ENCODE measurements at regions of chr1 and their contacts with region 1.

Region 1: GRCh38 chr1:28581536-28582247 is 10.4 kb upstream of the RAB42 start:
- DNase-seq: peak; percentile 91 to 94 (median 93)
- H3K4me3 ChIP-seq: peak overlapping the region; percentile 82 to 99
- H3K4me3 Mint-ChIP-seq: peak overlapping the region; percentile 94 to 99 (median 98)
- H3K27ac ChIP-seq: peak overlapping the region; percentile 82
- H3K27ac Mint-ChIP-seq: peak overlapping the region; percentile 92 to 98 (median 95)
- H3K4me1 ChIP-seq: peaks cover 33% of the 10 kb centered on the region
- H3K4me1 Mint-ChIP-seq: peaks cover 21 to 54% (median 38%) of the 10 kb centered on the region in 4 donors
- H3K27me3 ChIP-seq: no peaks in the 10 kb centered on the region
- H3K27me3 Mint-ChIP-seq: no peaks in the 10 kb centered on the region

Region 2: GRCh38 chr1:28208818-28209441 is 372.8 kb before region 1 on chr1:
- CTCF ChIA-PET with region 1: no interaction called
- POLR2A ChIA-PET with region 1: no interaction called
- intact Hi-C with region 1: no loop called
- DNase-seq: peak; percentile 63 to 69 (median 65)
- H3K4me3 ChIP-seq: no peak overlapping the region
- H3K4me3 Mint-ChIP-seq: no peak overlapping the region
- H3K27ac ChIP-seq: no peak overlapping the region
- H3K27ac Mint-ChIP-seq: peak overlapping the region in 2 of 7 donors; percentile 20 to 44
- H3K4me1 ChIP-seq: no peaks in the 10 kb centered on the region
- H3K4me1 Mint-ChIP-seq: peaks cover 8 to 10% (median 9%) of the 10 kb centered on the region in 4 donors
- H3K27me3 ChIP-seq: no peaks in the 10 kb centered on the region
- H3K27me3 Mint-ChIP-seq: no peaks in the 10 kb centered on the region

Region 3: GRCh38 chr1:28248283-28249012 is 333.2 kb before region 1 on chr1:
- CTCF ChIA-PET with region 1: interaction called, 21 read pairs
- POLR2A ChIA-PET with region 1: interaction called, 40 read pairs
- intact Hi-C with region 1: loop called (anchors 2 kb)
- DNase-seq: peak; percentile 77 to 83 (median 81)
- H3K4me3 ChIP-seq: peak overlapping the region; percentile 2 to 25
- H3K4me3 Mint-ChIP-seq: peak overlapping the region; percentile 75 to 96 (median 88)
- H3K27ac ChIP-seq: peak overlapping the region; percentile 83
- H3K27ac Mint-ChIP-seq: peak overlapping the region; percentile 88 to 99 (median 94)
- H3K4me1 ChIP-seq: peaks cover 57% of the 10 kb centered on the region
- H3K4me1 Mint-ChIP-seq: peaks cover 34 to 56% (median 48%) of the 10 kb centered on the region in 4 donors
- H3K27me3 ChIP-seq: no peaks in the 10 kb centered on the region
- H3K27me3 Mint-ChIP-seq: no peaks in the 10 kb centered on the region

Region 4: GRCh38 chr1:28505406-28506187 is 76.1 kb before region 1 on chr1 and contains the start of gene RCC1:
- CTCF ChIA-PET with region 1: interaction called, 5 read pairs
- POLR2A ChIA-PET with region 1: interaction called, 234 read pairs
- intact Hi-C with region 1: loop called (anchors 2 kb)
- DNase-seq: peak; percentile 94 to 98 (median 97)
- H3K4me3 ChIP-seq: peak within 1 kb of the TSS; percentile 76 to 96
- H3K4me3 Mint-ChIP-seq: peak within 1 kb of the TSS; percentile 94 to 100 (median 98)
- H3K27ac ChIP-seq: peak within 1 kb of the TSS; percentile 66
- H3K27ac Mint-ChIP-seq: peak within 1 kb of the TSS; percentile 96 to 99 (median 98)
- H3K4me1 ChIP-seq: peaks cover 37% of the 10 kb centered on the region
- H3K4me1 Mint-ChIP-seq: peaks cover 29 to 53% (median 38%) of the 10 kb centered on the region in 4 donors
- H3K27me3 ChIP-seq: no peaks in the 10 kb centered on the region
- H3K27me3 Mint-ChIP-seq: no peaks in the 10 kb centered on the region
- total RNA-seq, gene RCC1: 16.7 to 18.4 TPM

Region 5: GRCh38 chr1:28560886-28561285 is 20.8 kb before region 1 on chr1:
- CTCF ChIA-PET with region 1: interaction called, 4 read pairs
- POLR2A ChIA-PET with region 1: interaction called, 199 read pairs
- intact Hi-C with region 1: no loop called
- DNase-seq: no peak
- H3K4me3 ChIP-seq: no peak overlapping the region
- H3K4me3 Mint-ChIP-seq: no peak overlapping the region
- H3K27ac ChIP-seq: no peak overlapping the region
- H3K27ac Mint-ChIP-seq: no peak overlapping the region
- H3K4me1 ChIP-seq: no peaks in the 10 kb centered on the region
- H3K4me1 Mint-ChIP-seq: peaks cover 0 to 8% (median 0%) of the 10 kb centered on the region in 4 donors
- H3K27me3 ChIP-seq: no peaks in the 10 kb centered on the region
- H3K27me3 Mint-ChIP-seq: no peaks in the 10 kb centered on the region

Region 6: GRCh38 chr1:28642847-28643635 is 61.3 kb after region 1 on chr1 and contains the start of gene TAF12:
- CTCF ChIA-PET with region 1: interaction called, 17 read pairs
- POLR2A ChIA-PET with region 1: interaction called, 233 read pairs
- intact Hi-C with region 1: loop called (anchors 1 kb)
- DNase-seq: peak; percentile 88 to 92 (median 91)
- H3K4me3 ChIP-seq: peak within 1 kb of the TSS; percentile 89 to 99
- H3K4me3 Mint-ChIP-seq: peak within 1 kb of the TSS; percentile 96 to 100 (median 99)
- H3K27ac ChIP-seq: peak within 1 kb of the TSS; percentile 74
- H3K27ac Mint-ChIP-seq: peak within 1 kb of the TSS; percentile 97 to 100 (median 98)
- H3K4me1 ChIP-seq: peaks cover 48% of the 10 kb centered on the region
- H3K4me1 Mint-ChIP-seq: peaks cover 32 to 62% (median 46%) of the 10 kb centered on the region in 4 donors
- H3K27me3 ChIP-seq: no peaks in the 10 kb centered on the region
- H3K27me3 Mint-ChIP-seq: no peaks in the 10 kb centered on the region
- total RNA-seq, gene TAF12: 23.5 to 25.2 TPM

Region 7: GRCh38 chr1:28656335-28656734 is 74.6 kb after region 1 on chr1:
- CTCF ChIA-PET with region 1: no interaction called
- POLR2A ChIA-PET with region 1: no interaction called
- intact Hi-C with region 1: no loop called
- DNase-seq: no peak
- H3K4me3 ChIP-seq: no peak overlapping the region
- H3K4me3 Mint-ChIP-seq: no peak overlapping the region
- H3K27ac ChIP-seq: no peak overlapping the region
- H3K27ac Mint-ChIP-seq: no peak overlapping the region
- H3K4me1 ChIP-seq: no peaks in the 10 kb centered on the region
- H3K4me1 Mint-ChIP-seq: no peaks in the 10 kb centered on the region
- H3K27me3 ChIP-seq: no peaks in the 10 kb centered on the region
- H3K27me3 Mint-ChIP-seq: no peaks in the 10 kb centered on the region

Region 8: DNA sequence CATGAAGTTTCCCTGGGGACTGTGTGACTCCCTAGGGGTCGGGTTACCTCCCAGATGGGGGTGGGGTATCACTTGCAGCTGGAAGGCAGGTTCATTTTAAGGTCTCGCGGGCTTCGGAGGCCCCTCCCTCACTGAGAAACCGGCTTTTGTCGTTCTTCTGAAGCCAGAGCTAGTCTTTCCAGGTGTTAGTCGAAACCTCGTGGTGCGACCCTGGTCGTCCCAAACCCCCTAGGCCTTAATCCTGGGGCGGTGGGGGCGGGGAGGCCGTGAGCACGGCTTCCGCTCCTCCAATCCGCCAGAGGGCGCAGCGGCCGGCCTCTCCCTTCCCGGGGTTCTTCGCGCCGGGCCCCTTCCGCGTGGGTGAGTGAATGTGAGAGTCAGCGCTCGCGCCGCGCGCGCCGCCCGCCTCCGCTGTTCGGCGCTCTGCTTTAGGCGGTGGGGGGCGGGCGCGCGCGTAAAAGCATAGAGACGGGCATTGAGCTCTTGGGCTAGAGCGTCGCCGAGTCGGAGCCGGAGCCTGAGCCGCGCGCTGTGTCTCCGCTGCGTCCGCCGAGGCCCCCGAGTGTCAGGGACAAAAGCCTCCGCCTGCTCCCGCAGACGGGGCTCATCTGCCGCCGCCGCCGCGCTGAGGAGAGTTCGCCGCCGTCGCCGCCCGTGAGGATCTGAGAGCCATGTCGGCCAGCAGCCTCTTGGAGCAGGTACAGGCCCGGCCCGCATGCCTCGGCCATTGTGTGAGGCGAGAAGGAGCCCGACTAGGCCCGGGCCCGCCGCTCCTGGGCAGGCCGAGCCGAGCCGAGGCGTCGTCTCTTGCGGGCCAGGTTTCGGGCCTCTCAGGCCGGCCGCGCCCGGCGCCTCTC is 155.0 kb after region 1 on chr1 and contains the start of gene YTHDF2:
- CTCF ChIA-PET with region 1: interaction called, 12 read pairs
- POLR2A ChIA-PET with region 1: interaction called, 53 read pairs
- intact Hi-C with region 1: loop called (anchors 1 kb)
- DNase-seq: peak; percentile 97
- H3K4me3 ChIP-seq: peak within 1 kb of the TSS; percentile 55 to 59
- H3K4me3 Mint-ChIP-seq: peak within 1 kb of the TSS; percentile 92 to 99 (median 96)
- H3K27ac ChIP-seq: peak within 1 kb of the TSS; percentile 90
- H3K27ac Mint-ChIP-seq: peak within 1 kb of the TSS; percentile 93 to 98 (median 97)
- H3K4me1 ChIP-seq: peaks cover 43% of the 10 kb centered on the region
- H3K4me1 Mint-ChIP-seq: peaks cover 18 to 51% (median 29%) of the 10 kb centered on the region in 4 donors
- H3K27me3 ChIP-seq: no peaks in the 10 kb centered on the region
- H3K27me3 Mint-ChIP-seq: peaks cover 0 to 2% of the 10 kb centered on the region in 2 donors
- total RNA-seq, gene YTHDF2: 65.1 to 76.8 TPM

Region 9: DNA sequence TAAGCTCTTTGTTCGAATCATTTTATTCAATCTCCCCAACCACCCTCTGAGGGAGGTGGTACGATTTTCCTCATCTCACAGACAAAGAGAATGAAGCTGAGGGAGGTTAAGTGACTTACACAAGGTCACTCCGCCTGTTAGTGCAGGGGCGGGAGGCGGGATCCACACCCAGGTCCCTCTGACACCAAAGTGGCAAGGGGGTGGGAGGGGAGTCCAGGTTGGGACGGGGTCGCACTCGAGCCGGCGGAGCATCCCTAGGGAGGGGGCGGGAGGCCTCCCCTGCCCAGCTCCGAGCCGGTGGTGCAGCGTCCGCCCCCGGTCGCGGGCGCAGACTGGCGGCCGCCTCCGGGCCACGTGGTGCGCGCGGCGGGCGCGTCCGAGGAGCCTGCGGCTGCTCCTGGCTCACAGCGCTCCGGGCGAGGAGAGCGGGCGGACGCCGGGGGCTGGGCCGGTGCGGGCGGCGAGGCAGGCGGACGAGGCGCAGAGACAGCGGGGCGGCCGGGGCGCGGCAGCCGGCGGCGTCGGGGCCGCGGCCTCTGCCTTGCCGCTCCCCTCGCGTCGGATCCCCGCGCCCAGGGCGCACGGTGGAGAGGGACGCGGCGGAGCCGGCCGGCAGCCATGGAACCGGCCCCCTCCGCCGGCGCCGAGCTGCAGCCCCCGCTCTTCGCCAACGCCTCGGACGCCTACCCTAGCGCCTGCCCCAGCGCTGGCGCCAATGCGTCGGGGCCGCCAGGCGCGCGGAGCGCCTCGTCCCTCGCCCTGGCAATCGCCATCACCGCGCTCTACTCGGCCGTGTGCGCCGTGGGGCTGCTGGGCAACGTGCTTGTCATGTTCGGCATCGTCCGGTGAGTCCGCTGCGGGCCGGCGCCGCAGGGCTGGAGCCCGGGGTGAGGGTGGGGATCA is 230.3 kb after region 1 on chr1 and contains the start of gene OPRD1:
- CTCF ChIA-PET with region 1: no interaction called
- POLR2A ChIA-PET with region 1: no interaction called
- intact Hi-C with region 1: no loop called
- DNase-seq: no peak
- H3K4me3 ChIP-seq: no peak within 1 kb of the TSS
- H3K4me3 Mint-ChIP-seq: peak within 1 kb of the TSS in 2 of 8 donors; percentile 41 to 51
- H3K27ac ChIP-seq: no peak within 1 kb of the TSS
- H3K27ac Mint-ChIP-seq: peak within 1 kb of the TSS in 1 of 7 donors; percentile 35
- H3K4me1 ChIP-seq: no peaks in the 10 kb centered on the region
- H3K4me1 Mint-ChIP-seq: peaks cover 0 to 6% (median 2%) of the 10 kb centered on the region in 4 donors
- H3K27me3 ChIP-seq: peaks cover 18% of the 10 kb centered on the region
- H3K27me3 Mint-ChIP-seq: peaks cover 43 to 47% of the 10 kb centered on the region in 2 donors
- total RNA-seq, gene OPRD1: not detected

Region 10: GRCh38 chr1:29181413-29182225 is 599.9 kb after region 1 on chr1 and contains the start of gene SRSF4:
- CTCF ChIA-PET with region 1: no interaction called
- POLR2A ChIA-PET with region 1: interaction called, 33 read pairs
- intact Hi-C with region 1: loop called (anchors 5 kb)
- DNase-seq: peak; percentile 98 to 99 (median 99)
- H3K4me3 ChIP-seq: peak within 1 kb of the TSS; percentile 86 to 99
- H3K4me3 Mint-ChIP-seq: peak within 1 kb of the TSS; percentile 93 to 97 (median 95)
- H3K27ac ChIP-seq: peak within 1 kb of the TSS; percentile 93
- H3K27ac Mint-ChIP-seq: peak within 1 kb of the TSS; percentile 93 to 97 (median 95)
- H3K4me1 ChIP-seq: peaks cover 51% of the 10 kb centered on the region
- H3K4me1 Mint-ChIP-seq: peaks cover 30 to 64% (median 45%) of the 10 kb centered on the region in 4 donors
- H3K27me3 ChIP-seq: no peaks in the 10 kb centered on the region
- H3K27me3 Mint-ChIP-seq: no peaks in the 10 kb centered on the region
- total RNA-seq, gene SRSF4: 83.3 to 86.8 TPM

Measured in CD4-positive, alpha-beta memory T cell (primary cell).